Prostate gland (tissue), 2 donors: ENCODE measurements at regions of chr1 and their contacts with region 1.

Region 1: DNA sequence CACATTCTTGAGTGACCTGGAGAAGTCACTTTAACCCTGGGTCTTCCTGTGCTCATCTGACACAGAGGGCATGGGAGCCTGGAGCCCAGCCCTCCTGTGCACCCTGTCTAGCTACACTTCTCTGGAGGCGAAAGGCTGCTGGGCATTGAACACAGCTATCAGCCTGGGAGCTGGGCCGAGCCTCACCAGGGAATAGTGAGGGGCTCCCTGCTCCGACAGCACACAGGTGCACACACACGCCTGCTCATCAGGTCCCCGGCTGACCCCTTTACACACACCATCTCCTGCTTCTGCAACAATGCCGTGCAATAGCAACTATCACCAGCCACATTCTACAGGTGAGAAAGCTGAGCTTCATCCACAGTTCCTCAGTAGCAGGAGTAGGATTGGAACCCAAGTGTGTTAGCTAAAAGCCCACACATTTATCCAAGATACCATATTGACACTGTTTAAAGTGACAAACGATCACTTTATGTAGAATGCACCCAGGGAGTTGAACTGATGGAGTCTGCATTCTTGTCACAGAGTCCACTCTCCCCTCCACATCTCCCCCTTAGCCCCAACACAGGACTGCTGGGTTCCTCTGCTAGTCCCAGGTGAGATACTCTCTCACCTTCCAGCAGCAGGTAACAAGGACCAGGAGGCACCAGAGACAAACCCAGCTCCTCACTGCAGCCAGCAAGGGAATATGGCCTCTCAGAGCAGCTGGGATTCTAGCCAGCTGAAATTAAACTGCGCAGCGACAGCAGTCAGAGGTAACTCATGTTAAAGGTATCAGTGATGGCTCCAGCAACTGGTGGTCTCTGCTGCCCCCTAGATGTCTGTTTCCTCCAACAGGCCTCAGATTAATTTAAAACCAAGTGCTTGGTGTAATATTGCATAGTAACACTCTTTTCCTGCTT is 18.3 kb upstream of the CAPN8 start:
- DNase-seq: peak; percentile 67
- H3K4me3 ChIP-seq: no peak overlapping the region
- H3K27ac ChIP-seq: no peak overlapping the region
- H3K4me1 ChIP-seq: no peaks in the 10 kb centered on the region
- H3K27me3 ChIP-seq: no peaks in the 10 kb centered on the region
- CTCF ChIP-seq: peak; percentile 33 to 83 (median 63)
- POLR2A ChIP-seq: no peak

Region 2: GRCh38 chr1:222749927-222750326 is 933.9 kb before region 1 on chr1:
- intact Hi-C with region 1: loop called (anchors 10 kb)
- DNase-seq: no peak
- H3K4me3 ChIP-seq: no peak overlapping the region
- H3K27ac ChIP-seq: no peak overlapping the region
- H3K4me1 ChIP-seq: no peaks in the 10 kb centered on the region
- H3K27me3 ChIP-seq: no peaks in the 10 kb centered on the region
- CTCF ChIP-seq: no peak
- POLR2A ChIP-seq: no peak

Region 3: GRCh38 chr1:223133824-223134435 is 549.9 kb before region 1 on chr1:
- intact Hi-C with region 1: loop called (anchors 2 kb)
- DNase-seq: peak; percentile 89
- H3K4me3 ChIP-seq: peak overlapping the region; percentile 17 to 32
- H3K27ac ChIP-seq: peak overlapping the region; percentile 70 to 82
- H3K4me1 ChIP-seq: no peaks in the 10 kb centered on the region
- H3K27me3 ChIP-seq: no peaks in the 10 kb centered on the region
- CTCF ChIP-seq: peak; percentile 92 to 97 (median 95)
- POLR2A ChIP-seq: no peak